Panc1 (cell line): ENCODE measurements at regions of chr19 and their contacts with region 1.

Region 1: GRCh38 chr19:6393074-6393983 is at the start of gene GTF2F1:
- DNase-seq: peak; percentile 75
- ATAC-seq: peak; percentile 94
- H3K4me3 ChIP-seq: peak within 1 kb of the TSS; percentile 80 to 94
- H3K27ac ChIP-seq: peak within 1 kb of the TSS; percentile 93
- H3K4me1 ChIP-seq: peaks cover 7% of the 10 kb centered on the region; the same call in 1 of the 2 replicates
- H3K27me3 ChIP-seq: no peaks in the 10 kb centered on the region
- CTCF ChIP-seq: no peak
- total RNA-seq, gene GTF2F1: 61.1 TPM

Region 2: DNA sequence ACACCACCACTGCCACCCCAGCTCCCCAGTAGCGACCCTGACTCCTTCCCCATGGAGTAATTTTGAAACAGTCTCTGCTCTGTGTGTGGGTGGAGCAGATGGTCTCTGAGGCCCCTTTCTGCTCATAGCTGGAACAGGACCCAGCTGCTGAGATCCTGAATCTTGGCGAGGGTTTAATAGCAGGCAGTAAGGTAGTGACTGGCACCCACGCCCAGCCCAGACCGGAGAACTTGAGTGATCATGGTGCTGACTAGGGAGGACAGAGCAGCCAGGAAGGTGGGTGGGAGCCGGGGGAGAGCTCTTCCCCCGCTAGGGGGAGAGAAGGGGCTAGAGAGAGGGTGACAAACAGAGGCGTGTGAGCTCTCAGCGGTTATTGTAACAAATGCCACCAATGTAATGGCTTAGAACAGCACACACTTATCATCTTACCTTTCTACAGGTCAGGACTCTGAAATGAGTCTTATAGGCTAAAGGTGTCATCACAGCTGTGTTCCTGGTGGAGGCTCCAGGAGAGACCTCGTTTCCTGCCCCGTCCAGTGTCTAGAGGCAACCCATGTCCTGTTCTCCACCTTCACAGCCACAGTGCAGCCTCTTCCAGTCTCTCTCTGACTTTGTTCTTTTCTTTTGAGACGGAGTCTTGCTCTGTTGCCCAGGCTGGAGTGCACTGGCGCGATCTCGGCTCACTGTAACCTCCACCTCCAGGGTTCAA is 52.7 kb before region 1 on chr19:
- CTCF ChIA-PET with region 1: no interaction called
- POLR2A ChIA-PET with region 1: interaction called, 14 read pairs
- in situ Hi-C with region 1: no loop called
- intact Hi-C with region 1: no loop called
- DNase-seq: no peak
- ATAC-seq: peak; percentile 51
- H3K4me3 ChIP-seq: no peak overlapping the region
- H3K27ac ChIP-seq: no peak overlapping the region
- H3K4me1 ChIP-seq: no peaks in the 10 kb centered on the region
- H3K27me3 ChIP-seq: no peaks in the 10 kb centered on the region
- CTCF ChIP-seq: no peak

Region 3: GRCh38 chr19:6372594-6373095 is 20.7 kb before region 1 on chr19 and contains the start of gene ALKBH7:
- CTCF ChIA-PET with region 1: no interaction called
- POLR2A ChIA-PET with region 1: interaction called, 11 read pairs
- in situ Hi-C with region 1: no loop called
- intact Hi-C with region 1: no loop called
- DNase-seq: peak; percentile 91
- ATAC-seq: peak; percentile 90
- H3K4me3 ChIP-seq: peak within 1 kb of the TSS; percentile 72 to 76
- H3K27ac ChIP-seq: peak within 1 kb of the TSS; percentile 92
- H3K4me1 ChIP-seq: peaks cover 2% of the 10 kb centered on the region
- H3K27me3 ChIP-seq: no peaks in the 10 kb centered on the region
- CTCF ChIP-seq: no peak
- total RNA-seq, gene ALKBH7: 65.0 TPM

Region 4: DNA sequence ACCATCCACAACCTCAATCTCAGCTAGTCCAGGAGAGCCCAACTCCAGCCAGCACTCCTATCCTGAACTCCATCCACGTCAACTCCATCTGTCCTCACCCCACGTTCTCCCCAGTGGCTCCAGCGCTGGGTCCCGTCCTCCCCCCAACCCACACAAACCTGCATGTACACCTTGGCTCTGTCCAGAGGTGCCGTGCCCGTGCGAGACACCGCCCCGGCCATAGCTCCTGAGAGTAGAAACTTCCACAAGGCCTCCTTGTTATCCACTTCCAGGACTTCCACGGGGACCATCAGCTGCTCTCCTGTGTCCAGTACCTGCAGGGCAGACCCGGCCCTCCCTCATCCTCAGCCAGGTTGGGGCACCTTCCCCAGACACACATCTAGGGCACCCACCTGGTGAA is 38.6 kb after region 1 on chr19:
- CTCF ChIA-PET with region 1: no interaction called
- POLR2A ChIA-PET with region 1: no interaction called
- in situ Hi-C with region 1: no loop called
- intact Hi-C with region 1: no loop called
- DNase-seq: no peak
- ATAC-seq: no peak
- H3K4me3 ChIP-seq: no peak overlapping the region
- H3K27ac ChIP-seq: no peak overlapping the region
- H3K4me1 ChIP-seq: no peaks in the 10 kb centered on the region
- H3K27me3 ChIP-seq: no peaks in the 10 kb centered on the region
- CTCF ChIP-seq: no peak

Region 5: DNA sequence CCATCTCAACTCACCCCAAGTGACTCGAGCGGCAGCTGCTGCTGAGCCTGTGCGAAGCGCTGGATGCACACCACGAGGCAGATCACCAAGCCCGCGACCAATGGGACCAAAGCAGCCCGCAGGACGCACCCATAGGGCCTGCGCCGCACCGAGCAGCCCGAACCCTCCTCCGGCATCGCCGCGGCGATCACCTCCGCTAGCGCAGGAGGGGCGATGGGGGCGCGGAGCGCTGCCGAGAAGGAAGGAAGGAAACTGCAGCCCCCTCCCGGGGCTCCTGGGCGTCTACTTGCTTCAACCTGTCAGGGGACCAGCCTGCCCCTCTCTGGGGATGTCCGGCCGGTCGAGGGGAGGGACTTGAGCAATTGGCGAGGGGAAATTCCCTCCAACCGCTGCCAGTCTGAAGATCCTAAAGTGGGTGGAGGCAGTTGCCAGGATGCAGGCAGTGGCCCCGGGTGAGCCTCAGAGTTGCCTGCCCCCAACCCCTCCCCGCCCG is 197.5 kb after region 1 on chr19 and contains the start of gene CD70:
- CTCF ChIA-PET with region 1: no interaction called
- POLR2A ChIA-PET with region 1: interaction called, 11 read pairs
- in situ Hi-C with region 1: no loop called
- intact Hi-C with region 1: no loop called
- DNase-seq: no peak
- ATAC-seq: peak; percentile 92
- H3K4me3 ChIP-seq: peak within 1 kb of the TSS; percentile 56 to 84
- H3K27ac ChIP-seq: peak within 1 kb of the TSS; percentile 86
- H3K4me1 ChIP-seq: peaks cover 6% of the 10 kb centered on the region; the same call in 1 of the 2 replicates
- H3K27me3 ChIP-seq: no peaks in the 10 kb centered on the region
- CTCF ChIP-seq: no peak
- total RNA-seq, gene CD70: 45.4 TPM

Region 6: GRCh38 chr19:7069042-7069903 is 675.9 kb after region 1 on chr19 and contains the start of gene ZNF557:
- CTCF ChIA-PET with region 1: no interaction called
- POLR2A ChIA-PET with region 1: interaction called, 12 read pairs
- in situ Hi-C with region 1: no loop called
- intact Hi-C with region 1: no loop called
- DNase-seq: peak; percentile 76
- ATAC-seq: peak; percentile 99
- H3K4me3 ChIP-seq: peak within 1 kb of the TSS; percentile 95 to 97
- H3K27ac ChIP-seq: peak within 1 kb of the TSS; percentile 88
- H3K4me1 ChIP-seq: no peaks in the 10 kb centered on the region
- H3K27me3 ChIP-seq: no peaks in the 10 kb centered on the region
- CTCF ChIP-seq: no peak
- total RNA-seq, gene ZNF557: 7.6 TPM